GM12878 (cell line): ENCODE measurements at regions of chr1 and their contacts with region 1.

Region 1: GRCh38 chr1:10398734-10399623 is at the start of gene PGD:
- DNase-seq: peak; percentile 89
- ATAC-seq: peak; percentile 97
- H3K4me3 ChIP-seq: peak within 1 kb of the TSS; percentile 88
- H3K27ac ChIP-seq: peak within 1 kb of the TSS; percentile 75
- H3K4me1 ChIP-seq: peaks cover 6% of the 10 kb centered on the region
- H3K27me3 ChIP-seq: no peaks in the 10 kb centered on the region
- CTCF ChIP-seq: no peak
- EP300 ChIP-seq: 0 out of 4 replicates have a peak, but pooled peaks of 1 of the 2 experiments have one; percentile 22
- POLR2A ChIP-seq: peak; percentile 95
- RAD21 ChIP-seq: no peak
- polyA plus RNA-seq, gene PGD: 152 to 190 TPM

Region 2: DNA sequence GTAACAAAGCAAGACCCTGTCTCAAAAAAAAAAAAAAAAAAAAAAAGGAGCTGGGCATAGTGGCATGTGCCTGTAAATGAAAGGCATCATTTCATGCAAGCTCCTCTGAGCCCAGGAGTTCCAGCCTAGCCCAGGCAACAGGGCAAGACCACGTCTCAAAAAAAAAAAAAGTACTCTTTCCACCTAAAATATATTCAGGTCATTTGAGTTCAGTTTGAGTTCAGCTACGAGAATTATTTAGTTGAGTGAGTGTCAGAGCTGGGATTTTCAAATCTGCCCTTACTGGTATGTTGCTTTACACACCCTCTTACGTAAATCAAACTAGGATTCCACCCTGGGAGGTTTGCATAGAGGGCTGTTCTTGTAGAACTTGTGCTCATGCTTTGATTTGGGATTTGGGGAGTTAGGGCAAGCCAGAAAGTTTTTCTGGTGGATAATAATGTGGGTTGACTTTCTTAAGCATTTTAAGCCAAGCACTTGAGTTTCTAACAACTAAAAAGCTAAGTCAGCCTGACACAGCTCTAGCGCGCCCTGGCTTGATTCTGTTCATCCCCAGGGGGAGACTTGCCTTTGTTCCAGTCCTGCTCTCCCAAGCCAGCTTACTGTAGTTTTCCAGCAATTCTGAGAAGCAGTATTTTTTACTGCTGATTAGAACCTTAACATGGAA is 11.4 kb before region 1 on chr1:
- CTCF ChIA-PET with region 1: interaction called, 5 read pairs
- POLR2A ChIA-PET with region 1: interaction called, 8 read pairs
- RAD21 ChIA-PET with region 1: interaction called, 7 read pairs
- SMC1A ChIA-PET with region 1: interaction called, 26 read pairs
- in situ Hi-C with region 1: no loop called
- intact Hi-C with region 1: loop called (anchors 1 kb)
- DNase-seq: no peak
- ATAC-seq: no peak
- H3K4me3 ChIP-seq: no peak overlapping the region
- H3K27ac ChIP-seq: no peak overlapping the region
- H3K4me1 ChIP-seq: peaks cover 6% of the 10 kb centered on the region
- H3K27me3 ChIP-seq: no peaks in the 10 kb centered on the region
- CTCF ChIP-seq: no peak
- EP300 ChIP-seq: no peak
- POLR2A ChIP-seq: no peak
- RAD21 ChIP-seq: no peak

Region 3: GRCh38 chr1:10472220-10473144 is 73.5 kb after region 1 on chr1 and contains the start of gene DFFA:
- CTCF ChIA-PET with region 1: no interaction called
- POLR2A ChIA-PET with region 1: no interaction called
- RAD21 ChIA-PET with region 1: no interaction called
- SMC1A ChIA-PET with region 1: no interaction called
- in situ Hi-C with region 1: no loop called
- intact Hi-C with region 1: no loop called
- DNase-seq: peak; percentile 95
- ATAC-seq: peak; percentile 86
- H3K4me3 ChIP-seq: peak within 1 kb of the TSS; percentile 79
- H3K27ac ChIP-seq: peak within 1 kb of the TSS; percentile 70
- H3K4me1 ChIP-seq: peaks cover 18% of the 10 kb centered on the region
- H3K27me3 ChIP-seq: no peaks in the 10 kb centered on the region
- CTCF ChIP-seq: no peak
- EP300 ChIP-seq: no peak
- POLR2A ChIP-seq: peak; percentile 91
- RAD21 ChIP-seq: no peak
- polyA plus RNA-seq, gene DFFA: 55.6 to 57.3 TPM

Region 4: GRCh38 chr1:10646347-10646861 is 247.4 kb after region 1 on chr1:
- CTCF ChIA-PET with region 1: no interaction called
- POLR2A ChIA-PET with region 1: no interaction called
- RAD21 ChIA-PET with region 1: no interaction called
- SMC1A ChIA-PET with region 1: no interaction called
- in situ Hi-C with region 1: no loop called
- intact Hi-C with region 1: no loop called
- DNase-seq: no peak
- ATAC-seq: peak; percentile 54
- H3K4me3 ChIP-seq: no peak overlapping the region
- H3K27ac ChIP-seq: no peak overlapping the region
- H3K4me1 ChIP-seq: no peaks in the 10 kb centered on the region
- H3K27me3 ChIP-seq: no peaks in the 10 kb centered on the region
- CTCF ChIP-seq: no peak
- EP300 ChIP-seq: no peak
- POLR2A ChIP-seq: no peak
- RAD21 ChIP-seq: no peak